ENCODE measurements at regions of chr5 and their contacts with region 1.

Region 1: DNA sequence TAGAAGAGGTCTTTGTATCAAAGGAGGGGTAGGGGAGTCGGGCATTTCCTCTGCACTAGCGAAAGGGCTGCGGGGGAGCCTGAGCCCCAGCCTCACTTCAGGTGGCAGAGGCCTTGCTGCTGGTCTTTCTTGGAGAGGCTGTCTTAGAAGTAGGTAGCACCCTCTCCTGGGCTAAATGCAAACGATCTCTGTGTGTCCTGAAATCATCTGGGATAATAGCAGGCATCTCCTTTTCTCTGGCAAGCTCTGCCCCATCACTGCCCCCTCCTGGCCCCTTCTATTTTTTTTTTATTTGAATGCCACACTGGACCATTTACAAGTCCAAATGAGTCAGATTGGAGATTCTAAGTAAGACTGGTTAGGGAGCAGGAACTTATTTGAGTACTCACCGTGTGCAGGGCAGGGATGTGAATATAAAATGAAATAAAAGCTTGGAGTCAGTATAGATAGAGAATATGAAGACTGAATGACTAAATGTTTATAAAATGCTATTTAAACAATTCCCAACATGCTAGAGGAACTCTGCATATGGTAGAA is 137.1 kb downstream of the FGF1 start:
- DNase-seq: peak; percentile 87
- H3K4me3 ChIP-seq: no peak overlapping the region
- H3K27ac ChIP-seq: no peak overlapping the region
- H3K4me1 ChIP-seq: peaks cover 16% of the 10 kb centered on the region
- H3K27me3 ChIP-seq: no peaks in the 10 kb centered on the region
- CTCF ChIP-seq: peak; percentile 85 to 91

Region 2: GRCh38 chr5:142151436-142152383 is 397.1 kb before region 1 on chr5:
- CTCF ChIA-PET with region 1: no interaction called
- dilution Hi-C with region 1: no loop called
- in situ Hi-C with region 1: no loop called
- intact Hi-C with region 1: loop called (anchors 1 kb)
- DNase-seq: peak; percentile 37
- H3K4me3 ChIP-seq: no peak overlapping the region
- H3K27ac ChIP-seq: no peak overlapping the region
- H3K4me1 ChIP-seq: no peaks in the 10 kb centered on the region
- H3K27me3 ChIP-seq: no peaks in the 10 kb centered on the region
- CTCF ChIP-seq: peak; percentile 78 to 88

Region 3: GRCh38 chr5:142253938-142254337 is 294.9 kb before region 1 on chr5:
- CTCF ChIA-PET with region 1: no interaction called
- dilution Hi-C with region 1: loop called (anchors 10 kb)
- in situ Hi-C with region 1: no loop called
- intact Hi-C with region 1: no loop called
- DNase-seq: no peak
- H3K4me3 ChIP-seq: no peak overlapping the region
- H3K27ac ChIP-seq: no peak overlapping the region
- H3K4me1 ChIP-seq: peaks cover 4% of the 10 kb centered on the region
- H3K27me3 ChIP-seq: no peaks in the 10 kb centered on the region
- CTCF ChIP-seq: no peak

Region 4: GRCh38 chr5:142364251-142365145 is 184.3 kb before region 1 on chr5:
- CTCF ChIA-PET with region 1: no interaction called
- dilution Hi-C with region 1: loop called (anchors 10 kb)
- in situ Hi-C with region 1: no loop called
- intact Hi-C with region 1: no loop called
- DNase-seq: peak; percentile 88
- H3K4me3 ChIP-seq: peak overlapping the region; percentile 43 to 45 (median 44)
- H3K27ac ChIP-seq: peak overlapping the region; percentile 80
- H3K4me1 ChIP-seq: peaks cover 28% of the 10 kb centered on the region
- H3K27me3 ChIP-seq: no peaks in the 10 kb centered on the region
- CTCF ChIP-seq: peak in 1 of 2 donors; percentile 40

Region 5: GRCh38 chr5:142472300-142472951 is 76.4 kb before region 1 on chr5:
- CTCF ChIA-PET with region 1: no interaction called
- dilution Hi-C with region 1: no loop called
- in situ Hi-C with region 1: no loop called
- intact Hi-C with region 1: loop called (anchors 1 kb)
- DNase-seq: peak; percentile 85
- H3K4me3 ChIP-seq: no peak overlapping the region
- H3K27ac ChIP-seq: peak overlapping the region; percentile 69
- H3K4me1 ChIP-seq: peaks cover 30% of the 10 kb centered on the region
- H3K27me3 ChIP-seq: no peaks in the 10 kb centered on the region
- CTCF ChIP-seq: no peak

Region 6: DNA sequence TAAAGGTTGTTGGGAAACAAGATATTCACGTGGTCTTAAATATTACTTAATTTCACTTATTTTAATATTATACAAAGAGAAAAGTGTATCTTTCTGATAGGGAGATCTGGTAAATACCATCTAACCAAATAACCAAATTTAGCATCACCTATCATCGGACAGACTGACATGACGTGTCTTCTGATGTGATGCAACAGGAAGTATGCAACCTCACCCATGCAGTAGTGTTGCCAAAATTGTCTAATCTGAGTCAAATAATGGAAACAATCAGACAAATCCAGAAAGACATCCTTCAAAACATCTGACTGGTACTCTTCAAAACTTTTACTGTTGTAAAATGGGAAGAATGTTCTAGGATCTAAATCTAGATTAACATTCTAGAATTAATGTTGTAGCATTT is 10.9 kb before region 1 on chr5:
- CTCF ChIA-PET with region 1: no interaction called
- dilution Hi-C with region 1: no loop called
- in situ Hi-C with region 1: no loop called
- intact Hi-C with region 1: no loop called
- DNase-seq: peak; percentile 28
- H3K4me3 ChIP-seq: no peak overlapping the region
- H3K27ac ChIP-seq: no peak overlapping the region
- H3K4me1 ChIP-seq: no peaks in the 10 kb centered on the region
- H3K27me3 ChIP-seq: no peaks in the 10 kb centered on the region
- CTCF ChIP-seq: no peak